ENCODE measurements at regions of chr14 and their contacts with region 1.

Region 1: GRCh38 chr14:23095196-23096108 is at the start of gene C14orf119:
- DNase-seq: peak in 12 of 14 experiments; percentile 99 to 100 (median 100)
- ATAC-seq: peak; percentile 85
- H3K4me3 ChIP-seq: peak within 1 kb of the TSS; percentile 81
- H3K4me3 Mint-ChIP-seq: no peak within 1 kb of the TSS
- H3K27ac ChIP-seq: peak within 1 kb of the TSS; percentile 96 to 97
- H3K27ac Mint-ChIP-seq: no peak within 1 kb of the TSS
- H3K4me1 ChIP-seq: peaks cover 29% of the 10 kb centered on the region
- H3K4me1 Mint-ChIP-seq: peaks cover 46% of the 10 kb centered on the region
- H3K27me3 ChIP-seq: no peaks in the 10 kb centered on the region
- H3K27me3 Mint-ChIP-seq: no peaks in the 10 kb centered on the region
- CTCF ChIP-seq: no peak
- total RNA-seq, gene C14orf119: 3.1 to 3.9 TPM

Region 2: DNA sequence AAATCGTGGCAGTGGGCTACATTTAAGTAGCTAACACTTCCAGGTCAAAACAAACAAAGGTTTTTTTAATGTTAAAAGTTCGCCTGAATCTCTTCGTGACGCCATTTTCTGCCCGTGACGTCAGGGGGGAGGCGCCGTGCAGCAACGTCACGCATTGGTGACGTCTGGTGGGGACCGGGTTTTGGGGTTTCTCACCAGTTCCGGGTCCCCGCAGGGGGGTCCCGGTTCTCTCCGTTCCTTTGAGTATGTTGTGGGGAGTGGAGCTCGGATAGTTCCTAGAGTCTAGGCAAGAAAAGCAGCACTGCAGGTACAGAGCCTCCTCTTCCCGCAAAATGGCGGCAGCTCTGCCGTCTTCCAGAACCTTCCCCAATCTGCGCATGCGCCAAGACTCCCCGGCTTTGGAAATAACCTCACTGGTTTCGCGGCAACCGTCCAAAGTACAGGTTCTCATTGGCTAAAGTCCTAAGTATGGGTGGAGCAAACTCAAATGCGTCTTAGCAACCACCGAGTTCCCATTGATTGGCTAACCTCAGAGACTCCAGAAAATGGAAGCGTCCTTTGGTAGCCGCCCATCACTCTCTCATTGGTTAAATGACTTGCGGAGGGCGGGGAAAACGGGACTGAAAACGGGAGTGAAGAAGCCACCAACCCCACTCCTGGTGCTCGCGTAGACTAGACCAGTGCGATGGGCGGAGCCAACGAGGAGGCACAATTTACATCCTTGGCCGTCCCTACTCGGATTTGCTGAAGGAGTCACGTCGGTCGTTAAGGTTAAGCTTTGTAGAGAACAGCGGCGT is 176.4 kb before region 1 on chr14 and contains the start of gene RBM23:
- CTCF ChIA-PET with region 1: no interaction called
- POLR2A ChIA-PET with region 1: interaction called, 15 read pairs
- intact Hi-C with region 1: no loop called
- DNase-seq: peak; percentile 99 to 100 (median 100)
- ATAC-seq: peak; percentile 84
- H3K4me3 ChIP-seq: peak within 1 kb of the TSS; percentile 74
- H3K4me3 Mint-ChIP-seq: peak within 1 kb of the TSS; percentile 88
- H3K27ac ChIP-seq: peak within 1 kb of the TSS; percentile 99 to 100
- H3K27ac Mint-ChIP-seq: peak within 1 kb of the TSS; percentile 100
- H3K4me1 ChIP-seq: peaks cover 38% of the 10 kb centered on the region
- H3K4me1 Mint-ChIP-seq: peaks cover 50% of the 10 kb centered on the region
- H3K27me3 ChIP-seq: no peaks in the 10 kb centered on the region
- H3K27me3 Mint-ChIP-seq: peaks cover 4% of the 10 kb centered on the region
- CTCF ChIP-seq: no peak
- total RNA-seq, gene RBM23: 87.9 to 111 TPM

Region 3: GRCh38 chr14:22986508-22987054 is 108.9 kb before region 1 on chr14:
- CTCF ChIA-PET with region 1: interaction called, 5 read pairs
- POLR2A ChIA-PET with region 1: interaction called, 12 read pairs
- intact Hi-C with region 1: no loop called
- DNase-seq: peak; percentile 81 to 96 (median 88)
- ATAC-seq: peak; percentile 67
- H3K4me3 ChIP-seq: no peak overlapping the region
- H3K4me3 Mint-ChIP-seq: peak overlapping the region; percentile 3
- H3K27ac ChIP-seq: no peak overlapping the region
- H3K27ac Mint-ChIP-seq: no peak overlapping the region
- H3K4me1 ChIP-seq: peaks cover 17% of the 10 kb centered on the region
- H3K4me1 Mint-ChIP-seq: peaks cover 3% of the 10 kb centered on the region
- H3K27me3 ChIP-seq: peaks cover 0 to 5% of the 10 kb centered on the region in 2 experiments
- H3K27me3 Mint-ChIP-seq: no peaks in the 10 kb centered on the region
- CTCF ChIP-seq: peak; percentile 95

Region 4: DNA sequence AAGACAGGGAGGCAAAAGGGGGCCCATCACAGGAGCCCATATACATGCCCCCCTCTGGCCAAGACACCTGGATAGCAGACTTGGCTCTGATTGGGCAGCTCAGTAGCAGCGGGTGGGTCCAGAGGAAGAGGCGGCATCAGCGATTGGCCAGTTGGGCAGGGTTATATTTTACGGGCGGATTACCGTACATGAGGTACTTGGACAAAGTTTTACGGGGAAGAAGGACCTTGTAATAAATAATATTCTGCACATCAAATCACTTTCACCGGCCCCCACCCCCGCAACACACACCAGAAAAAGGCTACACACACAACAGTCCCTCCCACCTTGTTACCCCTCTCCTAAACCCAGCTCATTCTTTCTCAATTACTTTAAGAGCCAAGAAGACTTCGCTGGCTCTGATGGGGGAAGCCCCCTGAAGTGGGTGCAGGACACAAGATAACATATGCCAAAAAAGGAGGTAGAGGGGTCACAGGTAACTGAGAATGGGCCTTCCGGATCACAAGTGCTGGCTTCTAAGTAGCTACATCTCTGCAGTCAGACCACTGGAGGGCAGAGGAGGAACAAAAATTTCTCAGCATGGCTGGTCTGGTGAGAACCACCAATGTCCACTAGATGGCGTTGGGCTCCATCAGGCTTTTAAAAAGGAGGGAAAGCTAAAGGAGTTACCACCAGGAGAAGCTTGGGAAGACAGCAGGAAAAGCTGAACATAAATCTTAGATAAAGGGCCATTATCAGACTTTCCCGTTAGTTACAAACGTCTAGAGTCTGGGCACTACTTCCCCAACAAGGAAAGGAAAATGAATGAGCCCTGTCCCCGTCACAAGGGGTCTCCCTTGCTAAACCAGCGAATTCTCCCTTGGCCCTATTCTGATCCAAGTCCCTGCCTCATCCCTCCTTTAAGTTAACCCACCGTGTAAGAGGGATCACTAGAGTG is 26.7 kb before region 1 on chr14:
- CTCF ChIA-PET with region 1: interaction called, 19 read pairs
- POLR2A ChIA-PET with region 1: interaction called, 35 read pairs
- intact Hi-C with region 1: loop called in 1 of 2 experiments (anchors 2 kb)
- DNase-seq: peak; percentile 54 to 90 (median 65)
- ATAC-seq: peak; percentile 73
- H3K4me3 ChIP-seq: no peak overlapping the region
- H3K4me3 Mint-ChIP-seq: peak overlapping the region; percentile 78
- H3K27ac ChIP-seq: no peak overlapping the region
- H3K27ac Mint-ChIP-seq: peak overlapping the region; percentile 63
- H3K4me1 ChIP-seq: peaks cover 36% of the 10 kb centered on the region
- H3K4me1 Mint-ChIP-seq: peaks cover 49% of the 10 kb centered on the region
- H3K27me3 ChIP-seq: no peaks in the 10 kb centered on the region
- H3K27me3 Mint-ChIP-seq: no peaks in the 10 kb centered on the region
- CTCF ChIP-seq: peak; percentile 97

Region 5: DNA sequence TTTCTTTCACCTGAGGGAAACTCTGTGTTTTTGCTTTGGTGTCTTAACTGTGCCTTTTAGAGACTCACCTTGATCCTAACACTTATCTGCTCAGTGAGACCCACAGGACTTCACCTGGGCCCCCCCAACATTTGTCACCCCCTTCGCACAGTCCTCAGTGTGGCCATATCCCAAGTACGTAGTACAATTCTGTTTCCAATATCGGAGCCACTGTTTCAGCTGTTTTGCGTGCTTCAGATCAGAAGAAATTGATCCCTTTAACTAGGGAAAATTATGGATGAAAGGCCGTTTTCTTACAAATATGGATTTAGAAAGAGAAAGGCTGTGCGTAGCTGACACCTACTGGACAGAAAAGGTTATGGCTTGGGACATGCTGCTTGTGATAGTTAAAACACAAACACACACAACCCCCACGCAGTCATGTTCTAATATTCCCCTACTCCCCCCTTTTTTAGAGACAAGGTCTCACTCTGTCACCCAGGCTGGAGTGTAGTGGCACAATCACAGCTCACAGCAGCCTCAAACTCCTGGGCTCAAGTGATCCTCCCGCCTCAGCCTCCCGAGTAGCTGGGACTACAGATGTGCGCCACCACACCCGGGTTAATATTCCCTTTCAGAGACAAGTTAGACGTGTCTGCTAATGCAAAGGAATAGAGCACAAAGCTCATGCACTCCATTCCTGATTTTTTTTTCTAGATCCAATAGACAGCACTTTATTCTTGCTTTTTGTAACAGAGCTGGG is 91.6 kb after region 1 on chr14:
- CTCF ChIA-PET with region 1: interaction called, 8 read pairs
- POLR2A ChIA-PET with region 1: interaction called, 10 read pairs
- intact Hi-C with region 1: no loop called
- DNase-seq: peak in 7 of 14 experiments; percentile 3 to 68 (median 37)
- ATAC-seq: peak; percentile 58
- H3K4me3 ChIP-seq: no peak overlapping the region
- H3K4me3 Mint-ChIP-seq: no peak overlapping the region
- H3K27ac ChIP-seq: no peak overlapping the region
- H3K27ac Mint-ChIP-seq: no peak overlapping the region
- H3K4me1 ChIP-seq: peaks cover 15% of the 10 kb centered on the region
- H3K4me1 Mint-ChIP-seq: no peaks in the 10 kb centered on the region
- H3K27me3 ChIP-seq: peaks cover 2 to 12% of the 10 kb centered on the region in 2 experiments
- H3K27me3 Mint-ChIP-seq: no peaks in the 10 kb centered on the region
- CTCF ChIP-seq: peak; percentile 71

Region 6: GRCh38 chr14:23320774-23321571 is 225.5 kb after region 1 on chr14 and contains the start of gene PABPN1:
- CTCF ChIA-PET with region 1: interaction called, 3 read pairs
- POLR2A ChIA-PET with region 1: interaction called, 58 read pairs
- intact Hi-C with region 1: loop called in 1 of 2 experiments (anchors 10 kb)
- DNase-seq: peak; percentile 93 to 100 (median 96)
- ATAC-seq: peak; percentile 85
- H3K4me3 ChIP-seq: peak within 1 kb of the TSS; percentile 87
- H3K4me3 Mint-ChIP-seq: peak within 1 kb of the TSS; percentile 94
- H3K27ac ChIP-seq: peak within 1 kb of the TSS; percentile 92 to 96
- H3K27ac Mint-ChIP-seq: peak within 1 kb of the TSS; percentile 92
- H3K4me1 ChIP-seq: peaks cover 29% of the 10 kb centered on the region
- H3K4me1 Mint-ChIP-seq: peaks cover 35% of the 10 kb centered on the region
- H3K27me3 ChIP-seq: no peaks in the 10 kb centered on the region
- H3K27me3 Mint-ChIP-seq: no peaks in the 10 kb centered on the region
- CTCF ChIP-seq: no peak
- total RNA-seq, gene PABPN1: 188 to 195 TPM

Measured in CD4-positive, alpha-beta T cell (primary cell).